Naive thymus-derived CD4-positive, alpha-beta T cell (primary cell): ENCODE measurements at regions of chr19 and their contacts with region 1.

Region 1: GRCh38 chr19:19475849-19476828 is 39.2 kb downstream of the TSSK6 start:
- DNase-seq: no peak
- ATAC-seq: peak; percentile 50
- H3K4me3 ChIP-seq: no peak overlapping the region
- H3K4me3 Mint-ChIP-seq: peak overlapping the region in 5 of 10 donors; percentile 9 to 57 (median 32)
- H3K27ac ChIP-seq: peak overlapping the region; percentile 35
- H3K27ac Mint-ChIP-seq: peak overlapping the region; percentile 67 to 89 (median 80)
- H3K4me1 ChIP-seq: peaks cover 27 to 37% of the 10 kb centered on the region in 2 donors
- H3K4me1 Mint-ChIP-seq: peaks cover 52 to 95% (median 86%) of the 10 kb centered on the region in 7 donors
- H3K27me3 ChIP-seq: no peaks in the 10 kb centered on the region
- H3K27me3 Mint-ChIP-seq: no peaks in the 10 kb centered on the region

Region 2: GRCh38 chr19:19434483-19435045 is 41.6 kb before region 1 on chr19:
- CTCF ChIA-PET with region 1: no interaction called
- POLR2A ChIA-PET with region 1: no interaction called
- intact Hi-C with region 1: loop called in 1 of 2 experiments (anchors 5 kb)
- DNase-seq: no peak
- ATAC-seq: no peak
- H3K4me3 ChIP-seq: no peak overlapping the region
- H3K4me3 Mint-ChIP-seq: no peak overlapping the region
- H3K27ac ChIP-seq: no peak overlapping the region
- H3K27ac Mint-ChIP-seq: peak overlapping the region in 6 of 9 donors; percentile 17 to 83 (median 66)
- H3K4me1 ChIP-seq: peaks cover 14 to 29% of the 10 kb centered on the region in 2 donors
- H3K4me1 Mint-ChIP-seq: peaks cover 30 to 92% (median 79%) of the 10 kb centered on the region in 7 donors
- H3K27me3 ChIP-seq: no peaks in the 10 kb centered on the region
- H3K27me3 Mint-ChIP-seq: no peaks in the 10 kb centered on the region

Region 3: GRCh38 chr19:19459707-19460251 is 16.4 kb before region 1 on chr19:
- CTCF ChIA-PET with region 1: interaction called, 4 read pairs
- POLR2A ChIA-PET with region 1: interaction called, 13 read pairs
- intact Hi-C with region 1: loop called (anchors 2 kb)
- DNase-seq: peak in 8 of 9 donors; percentile 49 to 75 (median 61)
- ATAC-seq: peak; percentile 72
- H3K4me3 ChIP-seq: peak overlapping the region; percentile 55
- H3K4me3 Mint-ChIP-seq: peak overlapping the region; percentile 85 to 92 (median 91)
- H3K27ac ChIP-seq: peak overlapping the region; percentile 82
- H3K27ac Mint-ChIP-seq: peak overlapping the region; percentile 94 to 99 (median 98)
- H3K4me1 ChIP-seq: peaks cover 82% of the 10 kb centered on the region in 2 donors
- H3K4me1 Mint-ChIP-seq: peaks cover 63 to 84% (median 72%) of the 10 kb centered on the region in 7 donors
- H3K27me3 ChIP-seq: no peaks in the 10 kb centered on the region
- H3K27me3 Mint-ChIP-seq: no peaks in the 10 kb centered on the region

Region 4: GRCh38 chr19:20503476-20503875 is 1027.3 kb after region 1 on chr19:
- CTCF ChIA-PET with region 1: no interaction called
- POLR2A ChIA-PET with region 1: no interaction called
- intact Hi-C with region 1: no loop called
- DNase-seq: no peak
- ATAC-seq: no peak
- H3K4me3 ChIP-seq: no peak overlapping the region
- H3K4me3 Mint-ChIP-seq: no peak overlapping the region
- H3K27ac ChIP-seq: no peak overlapping the region
- H3K27ac Mint-ChIP-seq: no peak overlapping the region
- H3K4me1 ChIP-seq: no peaks in the 10 kb centered on the region
- H3K4me1 Mint-ChIP-seq: no peaks in the 10 kb centered on the region
- H3K27me3 ChIP-seq: no peaks in the 10 kb centered on the region
- H3K27me3 Mint-ChIP-seq: peaks cover 0 to 5% (median 0%) of the 10 kb centered on the region in 5 donors